ENCODE measurements at regions of chrX and their contacts with region 1.

Region 1: DNA sequence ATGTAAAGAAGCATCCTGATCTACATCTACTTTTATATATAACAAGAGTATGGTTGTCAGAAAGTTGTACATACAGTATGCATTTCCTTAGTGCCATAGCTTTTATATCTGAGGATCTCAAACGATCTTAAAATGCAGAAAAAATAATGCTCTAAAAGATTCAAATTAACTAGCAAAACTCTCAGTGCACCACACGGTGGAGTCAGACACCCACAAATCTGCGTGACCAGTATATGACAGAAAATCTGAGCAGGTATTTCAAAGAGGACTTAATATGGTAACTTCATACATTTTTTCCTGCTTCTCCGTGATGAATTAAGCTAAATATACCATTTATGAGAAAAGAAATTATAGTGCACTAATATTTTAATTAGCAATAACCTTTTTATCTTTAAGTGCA is 803.0 kb downstream of the DMD start:
- DNase-seq: no peak
- ATAC-seq: no peak
- H3K4me3 Mint-ChIP-seq: no peak overlapping the region
- H3K27ac Mint-ChIP-seq: no peak overlapping the region
- H3K4me1 Mint-ChIP-seq: no peaks in the 10 kb centered on the region
- H3K27me3 Mint-ChIP-seq: no peaks in the 10 kb centered on the region
- CTCF ChIP-seq: no peak

Region 2: DNA sequence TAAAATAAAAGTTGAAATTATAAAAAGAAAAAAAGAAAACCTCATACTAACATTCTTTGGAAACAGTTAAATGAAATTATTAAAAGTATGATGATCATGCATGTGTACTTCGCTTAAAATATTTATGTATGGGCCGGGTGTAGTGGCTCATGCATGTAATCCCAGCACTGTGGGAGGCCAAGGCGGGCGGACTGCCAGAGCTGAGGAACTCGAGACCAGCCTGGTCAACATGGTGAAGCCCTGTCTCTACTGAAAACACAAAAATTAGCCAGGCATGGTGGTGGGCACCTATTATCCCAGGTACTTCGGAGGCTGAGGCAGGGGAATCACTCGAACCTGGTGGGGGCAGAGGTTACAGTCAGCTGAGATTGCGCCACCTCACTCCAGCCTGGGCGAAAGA is 384.3 kb before region 1 on chrX:
- CTCF ChIA-PET with region 1: no interaction called
- POLR2A ChIA-PET with region 1: no interaction called
- intact Hi-C with region 1: no loop called
- DNase-seq: no peak
- ATAC-seq: no peak
- H3K4me3 Mint-ChIP-seq: no peak overlapping the region
- H3K27ac Mint-ChIP-seq: no peak overlapping the region
- H3K4me1 Mint-ChIP-seq: no peaks in the 10 kb centered on the region
- H3K27me3 Mint-ChIP-seq: no peaks in the 10 kb centered on the region
- CTCF ChIP-seq: no peak

Region 3: GRCh38 chrX:32455704-32456103 is 47.3 kb after region 1 on chrX:
- CTCF ChIA-PET with region 1: no interaction called
- POLR2A ChIA-PET with region 1: no interaction called
- intact Hi-C with region 1: loop called (anchors 10 kb)
- DNase-seq: no peak
- ATAC-seq: no peak
- H3K4me3 Mint-ChIP-seq: no peak overlapping the region
- H3K27ac Mint-ChIP-seq: no peak overlapping the region
- H3K4me1 Mint-ChIP-seq: no peaks in the 10 kb centered on the region
- H3K27me3 Mint-ChIP-seq: no peaks in the 10 kb centered on the region
- CTCF ChIP-seq: no peak

Region 4: GRCh38 chrX:32483534-32484136 is 75.2 kb after region 1 on chrX:
- CTCF ChIA-PET with region 1: no interaction called
- POLR2A ChIA-PET with region 1: no interaction called
- intact Hi-C with region 1: loop called (anchors 2 kb)
- DNase-seq: no peak
- ATAC-seq: no peak
- H3K4me3 Mint-ChIP-seq: no peak overlapping the region
- H3K27ac Mint-ChIP-seq: no peak overlapping the region
- H3K4me1 Mint-ChIP-seq: no peaks in the 10 kb centered on the region
- H3K27me3 Mint-ChIP-seq: no peaks in the 10 kb centered on the region
- CTCF ChIP-seq: no peak

Region 5: GRCh38 chrX:32673193-32673592 is 264.8 kb after region 1 on chrX:
- CTCF ChIA-PET with region 1: no interaction called
- POLR2A ChIA-PET with region 1: no interaction called
- intact Hi-C with region 1: loop called (anchors 1 kb)
- DNase-seq: no peak
- ATAC-seq: no peak
- H3K4me3 Mint-ChIP-seq: no peak overlapping the region
- H3K27ac Mint-ChIP-seq: no peak overlapping the region
- H3K4me1 Mint-ChIP-seq: no peaks in the 10 kb centered on the region
- H3K27me3 Mint-ChIP-seq: no peaks in the 10 kb centered on the region
- CTCF ChIP-seq: no peak

Region 6: DNA sequence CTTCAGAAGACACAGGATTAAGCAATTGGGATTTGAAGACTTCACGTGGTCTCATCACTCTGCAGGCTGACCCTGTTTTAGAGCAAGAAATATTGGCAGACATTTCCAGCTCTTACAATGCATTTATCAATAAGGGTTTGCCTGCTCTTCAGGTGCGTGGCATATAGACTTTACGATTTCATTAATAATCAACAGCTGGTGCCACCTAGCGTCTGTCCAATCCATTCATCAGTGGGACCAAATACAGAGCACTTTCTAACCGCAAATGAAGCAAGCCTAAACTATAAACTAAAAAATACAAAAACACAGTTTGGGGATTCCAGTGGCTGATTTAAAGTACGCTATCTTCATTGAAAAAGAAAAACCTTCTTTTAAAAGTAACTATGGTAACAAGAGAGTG is 928.4 kb after region 1 on chrX:
- CTCF ChIA-PET with region 1: no interaction called
- POLR2A ChIA-PET with region 1: no interaction called
- intact Hi-C with region 1: loop called (anchors 5 kb)
- DNase-seq: no peak
- ATAC-seq: no peak
- H3K4me3 Mint-ChIP-seq: no peak overlapping the region
- H3K27ac Mint-ChIP-seq: no peak overlapping the region
- H3K4me1 Mint-ChIP-seq: no peaks in the 10 kb centered on the region
- H3K27me3 Mint-ChIP-seq: no peaks in the 10 kb centered on the region
- CTCF ChIP-seq: no peak

Region 7: DNA sequence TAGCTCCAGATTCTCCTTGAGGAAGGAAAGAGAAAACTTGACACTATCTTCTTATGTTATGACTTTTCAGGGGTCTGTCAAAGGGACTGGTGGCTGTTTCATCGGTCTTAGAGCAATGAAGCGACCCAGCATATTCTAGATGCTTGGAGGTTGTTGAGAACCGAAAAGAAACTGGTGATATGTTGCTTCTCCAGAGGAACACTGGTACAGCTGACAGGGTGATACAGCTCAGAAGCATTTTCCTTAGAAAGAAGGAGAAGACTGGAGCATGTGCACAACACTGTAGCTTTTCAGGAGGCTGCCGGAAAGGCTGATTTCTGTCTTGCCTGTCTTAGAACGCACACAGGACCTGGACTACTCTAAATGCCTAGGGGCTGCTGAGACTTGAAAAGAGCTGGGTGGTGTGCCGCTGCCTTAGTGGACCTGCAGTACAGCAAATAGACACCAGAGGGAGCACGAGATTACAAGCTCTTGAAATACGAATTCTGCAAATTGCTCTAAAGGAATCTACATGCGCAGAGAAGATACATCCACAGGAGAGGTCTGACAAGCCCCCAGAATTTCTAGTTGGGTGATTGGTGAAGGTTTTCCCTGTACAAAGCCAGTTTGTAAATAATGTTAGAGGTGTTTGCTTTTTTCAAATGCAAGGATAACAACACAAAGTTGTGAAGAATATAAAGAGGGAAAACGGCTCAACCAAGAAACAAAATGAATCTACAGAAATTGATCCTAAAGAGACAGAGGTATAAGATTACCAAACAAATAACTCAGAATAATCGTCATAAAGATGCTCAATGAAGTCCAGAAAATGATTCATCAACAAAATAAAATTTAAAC is 1026.1 kb after region 1 on chrX:
- CTCF ChIA-PET with region 1: interaction called, 3 read pairs
- POLR2A ChIA-PET with region 1: no interaction called
- intact Hi-C with region 1: loop called (anchors 5 kb)
- DNase-seq: no peak
- ATAC-seq: no peak
- H3K4me3 Mint-ChIP-seq: no peak overlapping the region
- H3K27ac Mint-ChIP-seq: no peak overlapping the region
- H3K4me1 Mint-ChIP-seq: no peaks in the 10 kb centered on the region
- H3K27me3 Mint-ChIP-seq: no peaks in the 10 kb centered on the region
- CTCF ChIP-seq: no peak